ENCODE measurements at regions of chr20 and their contacts with region 1.

Region 1: DNA sequence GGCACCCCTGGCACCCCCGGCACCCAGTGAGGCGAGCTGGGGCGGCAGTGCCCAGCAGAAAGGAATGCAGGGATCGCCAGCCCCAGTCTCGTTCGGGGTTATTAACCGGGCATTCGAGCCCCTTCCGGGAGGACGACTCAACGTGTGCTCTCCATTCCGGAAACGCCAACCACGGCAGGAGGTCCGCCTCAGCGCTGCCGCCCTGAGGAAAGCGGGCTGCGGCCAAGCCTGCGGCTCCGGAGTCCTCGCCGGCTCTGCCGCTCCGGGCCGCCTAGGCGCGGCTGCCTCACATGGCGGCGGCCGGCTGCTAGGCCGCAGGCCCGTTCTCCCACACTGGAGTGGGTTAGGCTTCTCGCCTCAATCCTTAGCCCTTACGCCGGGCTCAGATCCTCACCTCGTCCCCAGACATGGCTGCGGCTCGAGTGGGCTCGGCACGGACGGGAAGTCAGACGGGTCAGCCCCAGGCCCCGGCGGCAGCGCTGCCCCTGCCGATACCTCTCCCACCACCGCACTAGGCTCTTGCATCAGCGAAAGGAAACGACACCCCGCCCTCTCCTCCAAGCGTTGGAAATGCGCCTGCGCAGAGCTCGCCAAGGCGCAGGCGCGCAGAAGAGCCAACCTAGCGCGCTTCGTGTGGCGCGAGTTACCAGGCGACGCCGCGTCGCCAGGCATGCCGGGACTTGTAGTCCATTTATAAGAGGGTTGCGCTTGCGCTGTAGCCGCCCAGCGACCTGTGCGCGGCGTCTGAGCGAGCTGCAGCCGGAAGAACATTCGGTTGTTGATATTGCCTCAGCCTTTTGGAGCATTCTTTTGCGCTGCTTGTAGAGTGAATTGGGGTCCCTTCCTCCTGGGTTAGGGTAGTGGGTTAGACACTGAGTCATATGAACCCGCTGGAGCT is at the start of gene EIF2S2:
- DNase-seq: peak; percentile 99
- ATAC-seq: peak; percentile 92
- H3K4me3 ChIP-seq: peak within 1 kb of the TSS; percentile 97
- H3K27ac ChIP-seq: peak within 1 kb of the TSS; percentile 68
- H3K4me1 ChIP-seq: peaks cover 27% of the 10 kb centered on the region; the same call in 1 of the 2 replicates
- H3K27me3 ChIP-seq: no peaks in the 10 kb centered on the region
- CTCF ChIP-seq: no peak
- total RNA-seq, gene EIF2S2: 75.4 and 83.4 TPM in 2 replicates

Region 2: GRCh38 chr20:33391722-33392415 is 720.1 kb before region 1 on chr20:
- CTCF ChIA-PET with region 1: interaction called, 14 read pairs
- POLR2A ChIA-PET with region 1: no interaction called
- intact Hi-C with region 1: no loop called
- DNase-seq: no peak
- ATAC-seq: no peak
- H3K4me3 ChIP-seq: no peak overlapping the region
- H3K27ac ChIP-seq: no peak overlapping the region
- H3K4me1 ChIP-seq: no peaks in the 10 kb centered on the region
- H3K27me3 ChIP-seq: no peaks in the 10 kb centered on the region
- CTCF ChIP-seq: no peak

Region 3: GRCh38 chr20:33897313-33897912 is 214.5 kb before region 1 on chr20:
- CTCF ChIA-PET with region 1: interaction called, 13 read pairs
- POLR2A ChIA-PET with region 1: no interaction called
- intact Hi-C with region 1: no loop called
- DNase-seq: peak; percentile 28
- ATAC-seq: 0 out of 2 replicates have a peak, but pooled peaks have one; percentile 24
- H3K4me3 ChIP-seq: no peak overlapping the region
- H3K27ac ChIP-seq: no peak overlapping the region
- H3K4me1 ChIP-seq: no peaks in the 10 kb centered on the region
- H3K27me3 ChIP-seq: peaks cover 8% of the 10 kb centered on the region; the same call in 1 of the 2 replicates
- CTCF ChIP-seq: peak; percentile 61

Region 4: GRCh38 chr20:34506480-34506879 is 394.5 kb after region 1 on chr20:
- CTCF ChIA-PET with region 1: no interaction called
- POLR2A ChIA-PET with region 1: no interaction called
- intact Hi-C with region 1: no loop called
- DNase-seq: no peak
- ATAC-seq: no peak
- H3K4me3 ChIP-seq: no peak overlapping the region
- H3K27ac ChIP-seq: no peak overlapping the region
- H3K4me1 ChIP-seq: no peaks in the 10 kb centered on the region
- H3K27me3 ChIP-seq: no peaks in the 10 kb centered on the region
- CTCF ChIP-seq: no peak